Activated CD4-positive, alpha-beta T cell treated with anti-CD3 and anti-CD28 coated beads, Interleukin-2, amount 10 ng/mL, durations not matched to agents 7 days and 5 days (primary cell): ENCODE measurements at regions of chr3 and their contacts with region 1.

Region 1: DNA sequence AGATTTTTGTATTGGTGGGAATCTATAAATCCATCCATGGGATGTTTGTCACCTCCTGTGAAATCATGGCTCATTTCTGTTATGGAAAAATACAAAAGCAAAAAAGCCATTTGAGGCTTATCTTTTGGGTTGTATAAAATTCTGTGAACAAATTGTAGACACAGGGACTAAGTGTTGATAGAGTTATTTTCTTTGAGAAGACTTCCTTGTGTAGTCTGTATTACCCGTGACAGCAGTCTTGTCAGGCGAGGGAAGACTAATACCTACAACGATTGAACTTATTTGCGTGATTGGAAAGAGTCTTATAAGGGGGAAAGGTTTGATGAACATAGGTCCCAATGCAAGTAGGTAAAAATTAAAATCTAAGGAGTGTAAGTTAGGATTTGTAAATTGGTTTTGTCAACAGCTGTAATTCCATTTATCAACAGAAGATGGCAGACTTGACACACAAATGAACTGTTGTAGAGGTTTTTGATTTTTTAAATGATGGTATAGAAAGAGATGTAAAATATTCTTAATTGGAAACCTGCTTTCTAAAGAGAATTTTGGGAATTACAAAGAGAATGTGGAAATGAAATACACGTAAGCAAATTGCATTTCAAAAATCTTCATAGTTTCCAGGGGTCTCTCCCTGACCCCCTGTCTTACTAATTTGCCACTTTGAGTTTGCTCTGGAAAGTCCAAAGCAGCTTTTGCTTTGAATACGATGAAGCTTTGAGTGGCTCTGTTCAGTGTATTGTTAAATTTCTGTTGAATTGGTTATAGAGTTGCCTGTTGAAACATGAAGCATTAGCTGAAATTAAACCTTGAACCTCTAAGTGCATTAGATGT is 33.2 kb downstream of the SLC25A26 start:
- DNase-seq: peak; percentile 16
- H3K4me3 Mint-ChIP-seq: no peak overlapping the region
- H3K27ac Mint-ChIP-seq: no peak overlapping the region
- H3K4me1 Mint-ChIP-seq: peaks cover 2% of the 10 kb centered on the region
- H3K27me3 Mint-ChIP-seq: no peaks in the 10 kb centered on the region

Region 2: GRCh38 chr3:65919826-65920225 is 334.2 kb before region 1 on chr3:
- CTCF ChIA-PET with region 1: no interaction called
- POLR2A ChIA-PET with region 1: no interaction called
- DNase-seq: no peak
- H3K4me3 Mint-ChIP-seq: no peak overlapping the region
- H3K27ac Mint-ChIP-seq: no peak overlapping the region
- H3K4me1 Mint-ChIP-seq: no peaks in the 10 kb centered on the region
- H3K27me3 Mint-ChIP-seq: no peaks in the 10 kb centered on the region

Region 3: DNA sequence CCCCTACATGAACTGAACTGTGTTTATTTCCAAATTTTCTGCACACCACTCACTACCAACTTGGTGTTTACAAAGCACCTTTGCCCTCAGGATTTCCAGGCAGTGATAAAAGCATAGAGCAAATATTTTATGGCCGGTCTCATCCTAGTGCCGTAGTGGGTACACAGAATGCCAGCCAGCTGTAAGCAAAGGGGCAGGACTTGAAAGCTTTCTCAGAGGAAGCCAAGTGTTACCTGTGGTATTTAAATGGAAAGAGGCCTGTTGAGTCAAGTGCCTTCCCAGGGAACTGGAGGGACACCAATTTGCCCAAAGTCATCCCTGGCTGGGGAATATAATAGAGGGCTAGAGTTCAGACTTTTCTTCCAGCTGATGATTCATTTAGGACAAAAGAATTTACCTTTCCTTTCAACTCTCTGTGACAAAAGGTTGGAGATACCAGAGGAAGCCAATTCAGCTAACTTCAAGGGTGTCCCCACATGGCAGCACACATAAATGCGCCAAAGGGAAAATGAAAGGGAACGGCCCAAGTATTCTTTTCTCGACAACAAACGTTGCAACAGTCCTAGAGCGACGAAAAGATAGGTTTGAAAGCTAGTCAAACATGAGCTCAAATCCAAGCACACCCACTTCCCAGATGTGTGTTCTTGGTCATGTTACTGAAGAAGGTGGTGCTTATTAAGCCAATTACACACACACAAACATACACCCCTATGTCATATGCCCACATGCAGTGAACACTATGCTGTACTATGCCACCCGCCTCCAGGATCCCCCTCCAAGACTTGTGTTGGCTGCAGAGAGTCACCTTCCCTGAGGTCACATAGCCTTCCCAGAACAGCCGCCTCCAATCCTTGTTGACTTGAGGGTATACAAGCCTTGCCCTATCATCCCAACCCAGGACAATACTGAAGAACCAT is 243.0 kb before region 1 on chr3:
- CTCF ChIA-PET with region 1: no interaction called
- POLR2A ChIA-PET with region 1: no interaction called
- DNase-seq: no peak
- H3K4me3 Mint-ChIP-seq: no peak overlapping the region
- H3K27ac Mint-ChIP-seq: no peak overlapping the region
- H3K4me1 Mint-ChIP-seq: no peaks in the 10 kb centered on the region
- H3K27me3 Mint-ChIP-seq: peaks cover 3% of the 10 kb centered on the region

Region 4: GRCh38 chr3:66047311-66048050 is 206.5 kb before region 1 on chr3:
- CTCF ChIA-PET with region 1: no interaction called
- POLR2A ChIA-PET with region 1: no interaction called
- DNase-seq: no peak
- H3K4me3 Mint-ChIP-seq: no peak overlapping the region
- H3K27ac Mint-ChIP-seq: no peak overlapping the region
- H3K4me1 Mint-ChIP-seq: no peaks in the 10 kb centered on the region
- H3K27me3 Mint-ChIP-seq: peaks cover 7% of the 10 kb centered on the region

Region 5: GRCh38 chr3:66362541-66362941 is 108.5 kb after region 1 on chr3:
- CTCF ChIA-PET with region 1: no interaction called
- POLR2A ChIA-PET with region 1: no interaction called
- DNase-seq: no peak
- H3K4me3 Mint-ChIP-seq: no peak overlapping the region
- H3K27ac Mint-ChIP-seq: no peak overlapping the region
- H3K4me1 Mint-ChIP-seq: no peaks in the 10 kb centered on the region
- H3K27me3 Mint-ChIP-seq: no peaks in the 10 kb centered on the region

Region 6: DNA sequence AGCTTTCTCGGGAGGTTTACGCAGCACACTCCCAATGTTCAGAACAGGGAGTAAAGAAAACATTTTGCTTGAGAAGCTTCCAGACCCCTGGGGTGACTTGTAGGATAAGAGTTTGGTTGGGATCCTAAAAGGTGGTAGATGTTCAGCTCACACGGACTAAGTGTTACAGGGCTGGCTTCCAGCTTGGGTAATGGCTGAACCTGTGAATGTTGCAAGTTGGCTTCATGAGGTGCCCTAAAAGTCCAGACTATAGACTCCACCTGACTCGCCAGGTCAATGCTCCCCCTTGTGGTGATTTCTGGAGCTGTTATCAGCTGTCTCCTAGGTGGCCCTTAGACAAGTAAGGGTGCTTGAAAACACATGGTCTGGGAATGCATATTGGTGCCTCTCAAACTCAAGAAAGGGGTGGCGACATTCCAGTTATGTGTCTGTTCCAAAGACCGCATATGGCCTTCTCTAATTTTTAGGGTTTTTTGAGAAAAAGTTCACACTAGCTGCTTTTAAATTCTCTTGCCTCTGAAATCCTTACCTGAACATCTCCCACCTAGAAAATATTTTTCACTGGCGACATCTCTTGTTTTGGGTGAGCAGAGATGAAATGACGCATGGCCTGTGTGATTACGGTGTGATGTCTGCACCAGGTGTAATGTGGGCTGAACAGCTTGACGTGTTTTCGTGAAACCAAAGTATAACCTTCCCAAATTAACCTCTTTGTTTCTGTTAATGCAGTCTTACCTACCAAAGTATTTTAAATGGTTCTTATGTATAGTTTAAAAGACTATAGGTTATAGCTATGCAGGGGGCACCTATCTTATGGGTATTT is 568.4 kb after region 1 on chr3:
- CTCF ChIA-PET with region 1: interaction called, 11 read pairs
- POLR2A ChIA-PET with region 1: no interaction called
- DNase-seq: peak; percentile 74
- H3K4me3 Mint-ChIP-seq: no peak overlapping the region
- H3K27ac Mint-ChIP-seq: no peak overlapping the region
- H3K4me1 Mint-ChIP-seq: no peaks in the 10 kb centered on the region
- H3K27me3 Mint-ChIP-seq: peaks cover 11% of the 10 kb centered on the region